ENCODE measurements at regions of chr1 and their contacts with region 1.

Region 1: GRCh38 chr1:86563849-86564248 is 17.0 kb downstream of the CLCA4 start:
- DNase-seq: no peak
- H3K4me3 ChIP-seq: no peak overlapping the region
- CTCF ChIP-seq: no peak

Region 2: DNA sequence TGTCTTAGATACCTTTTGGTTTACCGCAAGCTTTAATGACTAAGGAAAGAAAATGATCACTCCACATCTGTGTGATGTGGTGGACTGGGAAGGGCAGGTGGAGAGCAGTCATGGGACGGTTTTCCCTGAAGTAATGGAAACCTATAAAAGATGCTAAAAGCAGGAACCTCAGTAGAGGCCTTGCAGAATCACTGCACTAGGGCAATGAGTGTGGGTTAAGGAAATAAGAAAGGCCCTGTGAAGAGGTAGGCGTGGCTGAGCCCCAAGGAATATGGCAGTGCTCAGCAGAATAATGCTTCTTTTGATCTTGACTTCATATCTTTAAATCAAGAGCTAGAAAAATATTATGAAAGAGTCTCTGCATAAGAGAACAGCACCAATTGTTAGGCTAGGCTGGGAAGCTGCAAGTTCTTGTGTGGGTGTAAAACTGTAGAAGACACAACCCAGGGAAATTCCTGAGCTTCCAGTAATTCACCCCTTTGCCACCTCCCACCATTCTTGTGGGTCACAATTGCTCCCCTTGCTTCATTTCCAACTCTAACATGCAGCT is 33.0 kb after region 1 on chr1:
- in situ Hi-C with region 1: loop called (anchors 5 kb)
- DNase-seq: no peak
- H3K4me3 ChIP-seq: no peak overlapping the region
- CTCF ChIP-seq: no peak